RWPE1 (cell line): ENCODE measurements at regions of chr7 and their contacts with region 1.

Region 1: DNA sequence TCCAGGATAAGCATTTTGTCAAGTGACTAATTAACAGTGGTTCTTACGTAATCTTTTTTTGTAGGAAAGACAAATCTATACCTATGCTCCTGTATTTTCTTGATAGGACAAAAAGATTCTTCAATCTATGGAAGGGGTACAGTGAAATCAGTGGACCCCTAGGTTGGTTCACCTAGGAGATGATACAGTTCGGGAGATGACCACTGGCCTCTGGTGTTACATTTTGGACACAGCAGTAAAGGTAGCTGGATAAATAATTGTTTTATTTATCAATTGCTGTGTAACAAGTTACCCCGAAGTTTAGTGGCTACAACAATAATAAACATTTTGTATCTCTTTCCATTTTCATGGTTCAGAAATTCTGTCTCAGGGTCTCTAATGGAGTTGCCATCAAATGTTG is 288.2 kb upstream of the MAGI2 start:
- DNase-seq: no peak
- H3K27ac ChIP-seq: no peak overlapping the region
- CTCF ChIP-seq: peak; percentile 22

Region 2: GRCh38 chr7:79298145-79298760 is 443.4 kb before region 1 on chr7:
- CTCF ChIA-PET with region 1: interaction called, 12 read pairs
- POLR2A ChIA-PET with region 1: no interaction called
- DNase-seq: no peak
- H3K27ac ChIP-seq: no peak overlapping the region
- CTCF ChIP-seq: peak; percentile 93